MCF 10A (cell line): ENCODE measurements at regions of chr5 and their contacts with region 1.

Region 1: DNA sequence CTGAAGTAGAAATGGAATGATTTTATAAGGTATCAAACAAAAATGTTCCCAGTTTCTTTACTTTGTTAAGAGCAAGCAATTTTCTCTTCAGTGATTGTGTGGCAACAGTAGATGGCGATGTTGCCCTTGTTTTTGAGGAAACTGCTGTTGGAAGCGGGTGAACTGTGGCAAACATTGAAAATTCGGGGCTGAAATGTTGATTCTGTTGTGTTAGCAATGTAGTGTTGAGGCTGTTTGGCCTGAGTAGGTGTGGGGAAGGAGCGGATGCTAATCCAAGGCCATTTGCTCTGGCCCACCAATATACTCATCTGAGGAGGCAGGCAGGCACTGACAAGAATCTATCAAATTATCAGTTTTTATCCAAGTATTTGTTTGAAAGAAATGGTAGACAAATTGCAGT is 129.8 kb downstream of the SLC12A2 start:
- DNase-seq: peak; percentile 78
- H3K4me3 Mint-ChIP-seq: no peak overlapping the region
- H3K27ac Mint-ChIP-seq: no peak overlapping the region
- H3K4me1 Mint-ChIP-seq: peaks cover 11% of the 10 kb centered on the region
- H3K27me3 Mint-ChIP-seq: no peaks in the 10 kb centered on the region
- CTCF ChIP-seq: peak; percentile 96

Region 2: GRCh38 chr5:128201065-128201926 is 12.0 kb before region 1 on chr5:
- CTCF ChIA-PET with region 1: interaction called, 13 read pairs
- POLR2A ChIA-PET with region 1: no interaction called
- intact Hi-C with region 1: no loop called
- DNase-seq: peak; percentile 81
- H3K4me3 Mint-ChIP-seq: peak overlapping the region; percentile 42
- H3K27ac Mint-ChIP-seq: no peak overlapping the region
- H3K4me1 Mint-ChIP-seq: peaks cover 21% of the 10 kb centered on the region
- H3K27me3 Mint-ChIP-seq: no peaks in the 10 kb centered on the region
- CTCF ChIP-seq: peak; percentile 95

Region 3: GRCh38 chr5:128300181-128300580 is 86.8 kb after region 1 on chr5:
- CTCF ChIA-PET with region 1: no interaction called
- POLR2A ChIA-PET with region 1: no interaction called
- intact Hi-C with region 1: no loop called
- DNase-seq: no peak
- H3K4me3 Mint-ChIP-seq: no peak overlapping the region
- H3K27ac Mint-ChIP-seq: no peak overlapping the region
- H3K4me1 Mint-ChIP-seq: no peaks in the 10 kb centered on the region
- H3K27me3 Mint-ChIP-seq: no peaks in the 10 kb centered on the region
- CTCF ChIP-seq: no peak

Region 4: DNA sequence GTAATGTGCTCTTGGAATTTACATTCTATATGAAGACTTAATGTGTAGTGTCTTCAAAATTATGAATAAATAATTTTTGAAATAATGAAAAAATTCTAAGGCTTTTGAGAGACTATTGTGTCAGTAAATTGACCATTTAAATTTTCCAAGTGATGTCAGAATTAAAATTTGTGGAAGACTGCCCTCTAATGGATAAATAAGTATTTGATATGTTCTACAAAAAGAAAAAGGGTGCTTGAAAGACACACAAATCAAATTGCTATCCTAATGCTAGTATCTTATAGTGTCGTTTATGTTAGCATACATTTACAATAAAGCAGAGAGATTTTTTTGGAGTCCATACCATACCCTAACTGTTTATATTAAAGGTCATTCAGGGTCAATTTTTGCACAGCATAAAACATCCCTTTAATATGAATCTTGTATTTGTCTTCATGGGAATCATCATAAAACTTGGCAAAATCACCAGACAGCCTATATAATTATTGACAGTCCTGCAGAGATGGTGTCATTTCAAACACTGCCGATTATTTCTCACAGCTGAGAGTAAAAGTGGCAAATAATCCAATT is 631.1 kb after region 1 on chr5:
- CTCF ChIA-PET with region 1: interaction called, 30 read pairs
- POLR2A ChIA-PET with region 1: interaction called, 3 read pairs
- intact Hi-C with region 1: loop called (anchors 1 kb)
- DNase-seq: peak; percentile 46
- H3K4me3 Mint-ChIP-seq: no peak overlapping the region
- H3K27ac Mint-ChIP-seq: no peak overlapping the region
- H3K4me1 Mint-ChIP-seq: no peaks in the 10 kb centered on the region
- H3K27me3 Mint-ChIP-seq: no peaks in the 10 kb centered on the region
- CTCF ChIP-seq: peak; percentile 59

Region 5: DNA sequence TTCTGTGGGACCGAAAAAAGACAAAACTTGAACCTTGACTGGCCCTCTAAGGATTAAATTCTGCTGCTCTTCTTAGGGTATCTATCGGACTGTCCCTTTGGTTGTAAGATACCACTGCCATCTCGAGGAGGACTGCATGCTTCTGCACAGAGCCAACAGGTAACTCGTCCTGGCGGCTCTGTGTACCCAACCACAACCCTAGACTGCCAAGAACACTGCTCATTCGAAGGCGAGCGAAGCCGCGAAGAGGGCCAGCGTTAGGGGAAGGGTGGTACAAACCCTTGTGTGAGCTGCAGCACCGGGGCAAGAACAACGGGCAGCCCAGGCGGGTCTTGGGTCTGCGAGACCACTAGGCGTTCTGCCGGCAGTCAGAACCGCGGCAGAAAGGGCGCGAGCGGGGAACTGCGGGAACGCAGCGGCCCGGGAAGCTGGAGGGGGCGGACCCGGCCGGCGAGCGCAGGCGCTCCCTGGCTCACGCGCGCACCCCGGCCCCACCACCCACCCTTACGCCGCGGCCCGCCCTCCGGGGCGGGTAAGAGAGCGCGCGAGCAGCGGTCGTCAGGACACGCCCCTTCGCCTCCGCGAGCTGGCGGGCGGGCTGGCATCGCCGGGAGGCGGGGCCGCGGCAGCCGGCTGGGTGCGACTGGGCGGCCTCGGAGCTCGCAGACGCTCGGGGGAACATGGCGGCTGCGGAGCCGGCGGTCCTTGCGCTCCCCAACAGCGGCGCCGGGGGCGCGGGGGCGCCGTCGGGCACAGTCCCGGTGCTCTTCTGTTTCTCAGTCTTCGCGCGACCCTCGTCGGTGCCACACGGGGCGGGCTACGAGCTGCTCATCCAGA is 881.0 kb after region 1 on chr5 and contains the start of gene ISOC1:
- CTCF ChIA-PET with region 1: no interaction called
- POLR2A ChIA-PET with region 1: no interaction called
- intact Hi-C with region 1: loop called (anchors 10 kb)
- DNase-seq: peak; percentile 94
- H3K4me3 Mint-ChIP-seq: peak within 1 kb of the TSS; percentile 84
- H3K27ac Mint-ChIP-seq: peak within 1 kb of the TSS; percentile 46
- H3K4me1 Mint-ChIP-seq: peaks cover 20% of the 10 kb centered on the region
- H3K27me3 Mint-ChIP-seq: peaks cover 21% of the 10 kb centered on the region
- CTCF ChIP-seq: no peak
- total RNA-seq, gene ISOC1: 11.2 and 12.8 TPM in 2 replicates

Region 6: DNA sequence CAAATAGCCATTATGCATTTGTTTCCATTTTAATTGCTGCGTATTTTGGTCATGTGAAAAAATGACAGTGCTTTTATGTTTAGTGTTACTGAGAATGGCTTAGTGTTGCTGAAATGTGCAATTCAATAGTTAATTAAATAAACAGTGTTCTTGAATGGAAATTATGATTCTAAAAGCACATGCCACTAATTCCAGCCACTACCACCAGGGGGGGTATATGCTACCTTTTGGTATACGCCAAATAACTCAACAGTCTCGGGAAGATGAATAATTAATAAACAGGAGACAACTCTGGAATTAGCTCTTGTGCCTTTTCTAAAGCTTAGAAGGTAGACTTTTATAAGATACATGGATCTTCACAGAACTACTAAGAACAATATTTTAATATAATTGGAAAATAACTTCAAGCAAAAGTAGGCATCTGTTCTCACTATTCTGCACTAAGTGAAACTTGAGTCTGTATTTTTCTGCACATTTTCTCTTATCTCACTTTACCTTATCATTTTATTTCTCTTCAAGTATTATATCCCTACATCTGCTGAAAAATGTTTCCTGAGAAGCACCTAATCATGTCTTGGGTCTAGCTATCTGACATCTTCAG is 1451.1 kb after region 1 on chr5:
- CTCF ChIA-PET with region 1: no interaction called
- POLR2A ChIA-PET with region 1: no interaction called
- intact Hi-C with region 1: loop called (anchors 5 kb)
- DNase-seq: peak; percentile 83
- H3K4me3 Mint-ChIP-seq: no peak overlapping the region
- H3K27ac Mint-ChIP-seq: no peak overlapping the region
- H3K4me1 Mint-ChIP-seq: no peaks in the 10 kb centered on the region
- H3K27me3 Mint-ChIP-seq: no peaks in the 10 kb centered on the region
- CTCF ChIP-seq: peak; percentile 89